Activated naive CD4-positive, alpha-beta T cell treated with anti-CD3 and anti-CD28 coated beads for 36 hours (primary cell): ENCODE measurements at regions of chr1 and their contacts with region 1.

Region 1: DNA sequence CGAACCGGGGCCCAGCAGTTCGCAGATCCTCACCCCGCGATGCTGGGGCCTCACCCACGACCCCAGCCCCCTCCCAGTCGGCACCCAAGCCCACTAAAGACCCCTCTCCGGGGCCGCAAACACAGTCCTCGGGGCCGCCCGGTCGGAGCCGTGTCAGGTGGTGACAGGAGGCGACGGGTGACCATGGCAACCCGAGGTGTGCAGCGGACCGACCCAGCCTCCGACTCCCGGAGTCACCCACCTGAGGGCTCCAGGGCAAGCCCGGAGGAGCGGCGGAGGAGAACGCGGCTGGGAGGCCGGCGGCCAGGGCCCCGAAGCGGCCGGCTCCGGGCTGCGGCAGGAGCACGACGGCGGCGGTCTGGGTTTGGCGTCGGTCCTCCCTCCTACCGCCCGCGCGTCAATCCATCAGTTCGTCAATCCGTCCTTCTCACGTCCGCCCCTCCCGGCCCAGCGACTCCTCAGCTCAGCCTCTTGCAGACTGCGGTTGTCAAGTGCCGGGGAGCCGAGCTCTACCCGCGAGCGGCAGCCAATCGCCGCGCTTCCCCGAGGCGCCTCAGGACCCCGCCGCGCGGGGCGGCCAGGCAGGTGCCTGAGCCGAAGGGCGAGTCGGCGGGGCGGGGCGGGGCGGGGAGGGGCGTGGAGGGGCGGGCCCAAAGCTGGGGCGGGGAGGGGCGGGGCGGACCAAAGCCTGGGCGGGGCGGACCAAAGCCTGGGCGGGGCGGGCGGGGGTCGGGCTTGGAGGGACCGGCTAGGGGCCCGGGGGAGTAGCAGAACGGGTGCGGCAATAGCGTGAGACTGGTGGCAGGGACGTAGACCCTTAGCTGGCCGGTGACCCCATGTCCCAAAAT is at the start of gene WDR47:
- DNase-seq: peak; percentile 97
- H3K4me3 Mint-ChIP-seq: peak within 1 kb of the TSS; percentile 73
- H3K27ac Mint-ChIP-seq: peak within 1 kb of the TSS; percentile 6
- H3K4me1 Mint-ChIP-seq: peaks cover 12% of the 10 kb centered on the region
- H3K27me3 Mint-ChIP-seq: no peaks in the 10 kb centered on the region
- total RNA-seq, gene WDR47: 8.2 to 8.4 TPM

Region 2: DNA sequence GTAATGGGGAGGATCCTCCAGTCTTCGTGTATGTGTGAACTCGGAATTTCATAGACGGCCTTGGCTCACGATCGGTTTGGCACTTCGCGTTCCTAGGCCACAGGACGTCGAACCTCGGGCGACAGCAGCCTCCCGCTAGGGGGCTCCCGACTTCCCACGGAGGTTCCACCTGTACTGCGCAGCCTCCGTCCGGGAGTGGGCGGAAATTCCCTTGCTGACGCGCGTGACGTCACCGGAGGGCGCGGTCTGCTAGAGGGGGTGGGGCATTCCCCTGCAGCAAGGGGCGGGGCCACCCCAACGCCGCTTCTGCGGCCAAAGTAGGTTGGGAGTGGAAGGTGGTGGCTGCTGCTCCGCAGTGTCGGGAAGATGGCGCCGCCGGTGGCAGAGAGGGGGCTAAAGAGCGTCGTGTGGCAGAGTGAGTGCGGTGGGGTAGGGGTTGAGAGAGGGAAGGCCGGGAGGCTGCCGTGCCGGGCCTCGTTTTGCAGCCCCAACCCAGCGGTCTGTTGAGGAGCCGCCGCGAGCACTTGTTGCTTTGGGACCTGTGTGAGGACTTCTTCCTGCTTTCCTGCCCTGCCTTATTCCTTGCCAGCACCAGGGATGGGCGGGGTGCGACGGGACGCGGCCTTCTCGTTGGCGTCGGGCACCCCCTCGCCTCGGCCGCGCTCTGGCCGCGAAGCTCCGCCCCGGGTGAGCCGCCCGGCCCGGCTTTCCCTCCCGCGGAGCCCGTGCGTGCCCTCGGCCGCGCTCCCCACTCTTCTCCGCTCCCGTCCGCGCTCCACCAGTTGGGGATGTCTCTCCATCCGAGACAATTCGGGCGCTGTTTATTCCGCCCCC is 295.3 kb before region 1 on chr1 and contains the start of gene STXBP3:
- CTCF ChIA-PET with region 1: no interaction called
- intact Hi-C with region 1: loop called (anchors 1 kb)
- DNase-seq: peak; percentile 100
- H3K4me3 Mint-ChIP-seq: peak within 1 kb of the TSS; percentile 94
- H3K27ac Mint-ChIP-seq: peak within 1 kb of the TSS; percentile 92
- H3K4me1 Mint-ChIP-seq: peaks cover 28% of the 10 kb centered on the region
- H3K27me3 Mint-ChIP-seq: no peaks in the 10 kb centered on the region
- total RNA-seq, gene STXBP3: 29.1 to 30.3 TPM

Region 3: GRCh38 chr1:108828022-108828961 is 213.6 kb before region 1 on chr1:
- CTCF ChIA-PET with region 1: interaction called, 4 read pairs
- intact Hi-C with region 1: loop called (anchors 5 kb)
- DNase-seq: peak; percentile 83
- H3K4me3 Mint-ChIP-seq: no peak overlapping the region
- H3K27ac Mint-ChIP-seq: no peak overlapping the region
- H3K4me1 Mint-ChIP-seq: no peaks in the 10 kb centered on the region
- H3K27me3 Mint-ChIP-seq: no peaks in the 10 kb centered on the region

Region 4: DNA sequence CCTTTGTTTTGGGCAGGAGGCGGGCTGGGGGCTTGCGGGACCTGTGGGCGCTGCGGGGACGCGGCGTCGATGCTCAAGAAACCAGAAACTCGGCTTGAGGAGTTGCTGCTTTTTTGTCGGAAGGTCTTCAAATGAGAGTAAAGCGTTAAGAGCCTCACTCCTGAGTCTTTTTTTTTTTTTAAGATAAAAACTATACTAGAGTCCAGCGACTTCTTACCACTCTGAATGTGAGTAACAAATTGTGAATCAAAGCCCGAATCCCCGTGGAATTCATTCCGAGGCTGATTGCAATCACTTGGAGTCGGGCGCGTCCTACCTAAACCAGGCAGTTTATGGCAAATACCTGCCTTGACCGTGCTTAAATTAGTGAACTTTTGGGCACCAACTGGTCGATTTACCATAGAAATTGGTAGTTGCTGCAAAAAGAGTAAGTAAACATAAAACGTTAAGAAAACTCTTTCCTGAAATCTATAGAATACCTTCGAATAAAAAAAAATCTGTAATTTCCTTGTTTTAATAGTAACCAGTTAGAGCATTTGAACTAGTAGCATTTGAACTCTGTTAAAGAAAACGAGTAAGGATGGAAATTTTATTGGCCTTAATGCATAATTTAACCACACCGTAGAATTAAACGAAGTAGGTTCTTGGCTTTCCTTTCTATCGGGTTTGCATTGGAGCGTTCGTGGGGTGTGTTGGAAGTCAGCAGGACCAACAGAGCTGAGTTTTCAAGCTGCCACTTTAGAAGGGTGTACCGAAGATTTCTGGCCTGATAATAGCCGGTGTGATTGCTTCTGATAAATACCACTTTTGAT is 164.3 kb before region 1 on chr1:
- CTCF ChIA-PET with region 1: no interaction called
- intact Hi-C with region 1: loop called (anchors 2 kb)
- DNase-seq: no peak
- H3K4me3 Mint-ChIP-seq: peak overlapping the region; percentile 89
- H3K27ac Mint-ChIP-seq: no peak overlapping the region
- H3K4me1 Mint-ChIP-seq: peaks cover 4% of the 10 kb centered on the region
- H3K27me3 Mint-ChIP-seq: peaks cover 25% of the 10 kb centered on the region

Region 5: DNA sequence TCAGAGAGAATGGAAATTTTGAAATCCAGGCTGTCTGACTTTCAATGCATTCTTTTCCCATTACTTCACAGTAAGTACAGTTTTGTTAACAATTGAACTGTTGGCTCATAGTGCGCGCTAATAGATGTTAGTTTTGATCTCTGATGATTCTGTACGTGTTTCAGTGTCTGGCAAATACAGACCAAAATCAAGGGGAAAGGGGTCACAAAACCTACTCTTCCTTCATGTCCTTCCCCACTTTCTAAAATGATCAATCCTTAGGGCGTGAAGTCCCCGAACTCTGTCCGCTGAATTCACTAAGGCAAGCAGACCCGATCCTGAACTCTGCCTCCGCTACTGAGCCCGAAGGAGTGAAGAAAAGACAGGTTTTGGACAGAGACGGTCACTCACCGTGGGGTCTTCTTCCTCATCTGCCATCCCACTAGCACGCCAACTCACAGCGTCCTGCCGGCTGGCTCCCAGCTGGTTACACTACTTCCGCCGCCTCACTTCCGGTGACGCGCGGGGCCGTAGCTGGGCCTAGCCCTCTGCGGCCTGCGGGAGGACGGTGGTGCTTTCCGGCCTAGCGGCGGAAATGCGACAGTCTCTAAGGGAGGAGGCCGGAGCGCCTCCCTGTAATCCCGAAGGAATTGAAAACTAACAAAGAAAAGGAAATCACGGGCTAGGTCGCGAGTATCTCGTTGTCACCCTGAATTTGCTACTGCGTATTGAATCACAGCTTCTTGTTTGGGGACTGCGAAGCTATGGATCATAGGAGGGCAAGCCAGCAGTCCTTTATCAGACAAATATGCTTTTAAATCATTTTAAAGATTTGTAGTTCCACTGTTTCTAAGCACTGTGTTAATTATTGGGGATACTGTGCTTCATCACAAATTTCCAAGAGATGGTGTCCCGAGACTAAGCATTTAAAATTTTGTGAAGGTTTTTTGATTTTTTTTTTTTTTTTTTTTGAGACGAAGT is 34.0 kb after region 1 on chr1 and contains the start of gene TAF13:
- CTCF ChIA-PET with region 1: interaction called, 5 read pairs
- intact Hi-C with region 1: loop called (anchors 1 kb)
- DNase-seq: peak; percentile 90
- H3K4me3 Mint-ChIP-seq: peak within 1 kb of the TSS; percentile 95
- H3K27ac Mint-ChIP-seq: peak within 1 kb of the TSS; percentile 95
- H3K4me1 Mint-ChIP-seq: peaks cover 16% of the 10 kb centered on the region
- H3K27me3 Mint-ChIP-seq: no peaks in the 10 kb centered on the region
- total RNA-seq, gene TAF13: 20.1 to 23.7 TPM

Region 6: GRCh38 chr1:109099938-109100773 is 58.3 kb after region 1 on chr1:
- CTCF ChIA-PET with region 1: no interaction called
- intact Hi-C with region 1: loop called (anchors 2 kb)
- DNase-seq: peak; percentile 98
- H3K4me3 Mint-ChIP-seq: peak overlapping the region; percentile 99
- H3K27ac Mint-ChIP-seq: peak overlapping the region; percentile 97
- H3K4me1 Mint-ChIP-seq: peaks cover 23% of the 10 kb centered on the region
- H3K27me3 Mint-ChIP-seq: peaks cover 2% of the 10 kb centered on the region

Region 7: GRCh38 chr1:109282952-109283747 is 241.3 kb after region 1 on chr1 and contains the start of gene PSRC1:
- CTCF ChIA-PET with region 1: no interaction called
- intact Hi-C with region 1: loop called (anchors 5 kb)
- DNase-seq: peak; percentile 94
- H3K4me3 Mint-ChIP-seq: peak within 1 kb of the TSS; percentile 94
- H3K27ac Mint-ChIP-seq: peak within 1 kb of the TSS; percentile 89
- H3K4me1 Mint-ChIP-seq: peaks cover 6% of the 10 kb centered on the region
- H3K27me3 Mint-ChIP-seq: no peaks in the 10 kb centered on the region
- total RNA-seq, gene PSRC1: 19.3 to 21.5 TPM